PC-9 (cell line): ENCODE measurements at regions of chr19 and their contacts with region 1.

Region 1: DNA sequence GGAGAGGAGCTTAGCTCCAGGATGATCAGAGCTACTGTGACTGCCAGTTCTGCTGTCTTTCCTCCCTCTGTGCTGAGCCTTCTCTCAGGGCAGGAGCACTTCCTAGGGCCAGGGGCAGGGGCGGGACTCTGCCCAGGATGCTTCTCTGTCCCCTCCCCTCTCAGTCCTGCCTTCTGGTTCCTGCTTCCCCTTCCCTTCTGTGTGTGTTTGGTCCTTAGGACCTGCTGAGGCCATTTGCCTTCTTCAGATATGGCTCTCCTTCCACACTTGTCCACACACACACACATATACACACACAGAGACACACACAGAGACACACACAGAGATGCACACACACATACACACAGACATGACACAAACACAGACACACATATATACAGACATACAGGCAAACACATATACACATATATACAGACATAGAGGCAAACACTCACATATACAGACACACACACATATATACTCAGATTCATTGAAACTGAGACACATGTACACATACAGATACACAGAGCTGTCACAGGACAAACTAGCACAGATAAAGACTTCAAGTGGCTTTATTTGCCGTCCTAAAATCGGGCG is 22.0 kb upstream of the CD177 start:
- DNase-seq: no peak
- H3K4me3 ChIP-seq: peak overlapping the region; percentile 94; the same call in 1 of the 2 replicates
- H3K27ac ChIP-seq: no peak overlapping the region
- H3K4me1 ChIP-seq: peaks cover 40% of the 10 kb centered on the region
- H3K27me3 ChIP-seq: no peaks in the 10 kb centered on the region
- CTCF ChIP-seq: no peak

Region 2: DNA sequence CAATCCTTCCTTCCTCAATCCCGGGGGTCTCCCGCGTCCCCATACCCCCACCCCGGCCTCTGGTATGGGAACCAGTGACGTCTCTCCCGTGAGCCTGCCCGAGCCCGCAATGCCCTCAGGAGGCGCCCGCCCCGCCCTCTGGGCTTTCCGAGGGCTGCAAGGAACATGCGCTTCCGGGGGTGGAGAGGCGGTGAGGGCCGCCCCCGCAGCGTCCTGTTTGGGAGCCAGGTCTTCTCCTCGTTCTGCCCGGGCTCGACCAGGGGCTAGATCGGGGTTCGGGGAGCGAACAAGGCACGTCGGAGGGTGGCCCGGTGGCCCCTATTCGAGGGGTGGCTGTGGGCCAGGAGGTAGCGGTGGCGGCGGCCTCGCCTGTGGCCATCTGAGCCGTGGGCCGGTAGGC is 76.5 kb after region 1 on chr19:
- CTCF ChIA-PET with region 1: no interaction called
- POLR2A ChIA-PET with region 1: interaction called, 13 read pairs
- intact Hi-C with region 1: no loop called
- DNase-seq: no peak
- H3K4me3 ChIP-seq: no peak overlapping the region
- H3K27ac ChIP-seq: no peak overlapping the region
- H3K4me1 ChIP-seq: peaks cover 12% of the 10 kb centered on the region; the same call in 1 of the 2 replicates
- H3K27me3 ChIP-seq: no peaks in the 10 kb centered on the region
- CTCF ChIP-seq: no peak

Region 3: DNA sequence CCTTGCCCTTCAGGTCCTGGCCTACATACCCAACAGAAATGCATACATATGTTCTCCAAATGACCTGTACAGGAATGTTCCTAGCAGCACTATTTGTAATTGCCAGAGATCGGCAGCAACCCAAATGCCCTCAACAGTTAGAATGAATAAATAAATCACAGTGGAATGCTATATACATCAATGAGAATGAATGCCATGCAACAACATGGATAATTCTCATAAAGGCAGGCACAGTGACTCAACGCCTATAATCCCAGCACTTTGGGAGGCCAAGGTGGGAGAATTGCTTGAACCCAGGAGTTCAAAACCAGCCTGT is 101.8 kb after region 1 on chr19:
- CTCF ChIA-PET with region 1: interaction called, 3 read pairs
- POLR2A ChIA-PET with region 1: no interaction called
- intact Hi-C with region 1: loop called (anchors 2 kb)
- DNase-seq: no peak
- H3K4me3 ChIP-seq: no peak overlapping the region
- H3K27ac ChIP-seq: no peak overlapping the region
- H3K4me1 ChIP-seq: peaks cover 26% of the 10 kb centered on the region
- H3K27me3 ChIP-seq: no peaks in the 10 kb centered on the region
- CTCF ChIP-seq: no peak

Region 4: DNA sequence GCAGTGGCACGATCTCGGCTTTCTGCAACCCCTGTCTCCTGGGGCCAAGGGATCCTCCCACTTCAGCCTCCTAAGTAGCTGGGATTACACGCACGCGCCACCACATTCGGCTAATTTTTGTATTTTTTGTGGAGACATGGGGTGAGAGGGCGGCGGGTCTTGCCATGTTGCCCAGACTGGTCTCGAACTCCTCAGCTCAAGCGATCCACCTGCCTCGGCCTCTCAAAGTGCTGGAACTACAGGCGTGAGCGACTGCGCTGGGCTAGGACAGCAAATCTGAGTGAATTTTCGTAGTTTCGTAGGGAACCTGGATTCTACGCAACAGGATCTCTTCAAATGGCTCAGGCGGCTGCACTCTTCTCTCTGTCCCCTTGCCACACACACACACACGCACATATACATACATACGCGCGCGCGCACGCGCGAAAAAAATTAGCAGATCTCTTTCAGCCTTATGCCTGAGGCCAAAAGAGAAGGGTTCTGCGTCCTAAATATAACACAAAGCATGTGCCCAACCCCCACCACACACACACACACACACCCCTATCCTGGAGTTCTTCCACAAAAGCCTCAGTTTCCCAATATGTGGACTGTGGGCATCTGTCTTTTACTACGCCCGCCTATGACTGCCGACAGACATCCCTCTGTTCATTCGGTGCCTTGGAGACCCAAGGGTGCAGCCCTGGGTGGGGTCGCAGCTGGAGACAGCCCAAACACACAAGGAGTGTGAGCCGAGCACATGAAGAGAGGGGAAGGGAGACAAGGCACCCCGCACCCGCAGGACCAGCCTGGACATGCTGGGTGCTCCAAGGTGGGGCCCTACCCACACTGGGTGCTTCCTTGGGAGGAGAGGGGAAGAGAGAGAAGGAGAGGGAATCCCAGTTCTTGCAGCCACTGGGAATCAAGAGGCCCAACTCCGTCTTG is 244.7 kb after region 1 on chr19:
- CTCF ChIA-PET with region 1: no interaction called
- POLR2A ChIA-PET with region 1: no interaction called
- intact Hi-C with region 1: no loop called
- DNase-seq: peak in 1 of 2 experiments; percentile 18
- H3K4me3 ChIP-seq: peak overlapping the region; percentile 94; the same call in 1 of the 2 replicates
- H3K27ac ChIP-seq: no peak overlapping the region
- H3K4me1 ChIP-seq: peaks cover 10% of the 10 kb centered on the region; the same call in 1 of the 2 replicates
- H3K27me3 ChIP-seq: no peaks in the 10 kb centered on the region
- CTCF ChIP-seq: no peak